AG04449 (cell line): ENCODE measurements at regions of chr14 and their contacts with region 1.

Region 1: GRCh38 chr14:28751467-28752058 is 15.0 kb upstream of the FOXG1 start:
- DNase-seq: no peak
- H3K4me3 ChIP-seq: no peak overlapping the region
- CTCF ChIP-seq: peak; percentile 74

Region 2: DNA sequence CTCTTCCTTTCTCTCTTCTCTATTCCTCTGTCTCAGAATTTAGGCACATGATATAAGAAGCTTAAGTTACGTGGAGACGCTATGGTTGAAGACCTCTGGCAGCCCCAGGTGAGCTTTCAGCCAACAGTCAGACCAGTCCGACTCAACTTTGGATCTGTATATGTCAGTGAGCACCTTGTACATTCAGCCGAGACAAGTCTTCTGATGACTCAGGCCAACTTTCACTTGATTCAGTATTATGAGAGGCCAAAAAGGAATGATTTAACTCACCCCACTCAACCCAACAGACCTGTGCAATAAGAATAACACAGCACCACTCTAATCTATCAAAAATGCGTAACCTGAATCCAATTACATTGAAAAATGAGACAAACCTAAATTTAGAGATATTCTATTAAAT is 32.4 kb before region 1 on chr14:
- CTCF ChIA-PET with region 1: no interaction called
- POLR2A ChIA-PET with region 1: no interaction called
- DNase-seq: no peak
- H3K4me3 ChIP-seq: no peak overlapping the region
- CTCF ChIP-seq: no peak

Region 3: DNA sequence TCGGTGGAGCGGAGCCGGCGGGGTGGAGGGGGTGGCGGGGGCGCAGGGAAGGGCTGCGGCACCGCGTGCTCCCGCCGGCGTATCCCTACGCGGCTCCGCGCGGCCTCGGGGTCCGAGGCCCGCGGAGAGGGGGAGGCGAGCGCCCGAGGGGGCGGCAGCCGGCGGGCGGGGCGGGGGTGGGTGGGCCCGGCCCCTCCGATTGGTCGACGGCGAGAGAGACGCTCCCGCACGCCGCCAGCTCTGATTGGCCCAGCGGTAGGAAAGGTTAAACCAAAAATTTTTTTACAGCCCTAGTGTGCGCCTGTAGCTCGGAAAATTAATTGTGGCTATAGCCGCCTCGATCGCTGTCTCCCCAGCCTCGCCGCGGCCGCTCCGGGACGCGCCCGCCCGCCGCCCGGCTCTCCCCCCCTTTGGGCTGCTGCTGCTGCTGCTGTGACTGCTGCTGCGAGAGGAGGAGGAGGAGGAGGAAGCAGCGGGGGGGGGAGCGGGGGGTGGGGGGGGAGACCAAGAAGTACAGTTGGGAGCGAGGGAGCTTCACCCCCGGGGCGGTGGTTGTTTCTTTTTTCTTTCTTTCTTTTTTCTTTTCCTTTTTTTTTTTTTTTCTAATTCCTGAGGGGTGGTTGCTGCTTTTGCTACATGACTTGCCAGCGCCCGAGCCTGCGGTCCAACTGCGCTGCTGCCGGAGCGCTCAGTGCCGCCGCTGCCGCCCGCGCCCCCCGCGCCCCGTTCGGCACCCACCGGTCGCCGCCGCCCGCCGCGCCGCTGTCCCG is 15.1 kb after region 1 on chr14 and contains the start of gene FOXG1:
- CTCF ChIA-PET with region 1: interaction called, 11 read pairs
- POLR2A ChIA-PET with region 1: no interaction called
- DNase-seq: no peak
- H3K4me3 ChIP-seq: peak within 1 kb of the TSS; percentile 33
- CTCF ChIP-seq: no peak

Region 4: DNA sequence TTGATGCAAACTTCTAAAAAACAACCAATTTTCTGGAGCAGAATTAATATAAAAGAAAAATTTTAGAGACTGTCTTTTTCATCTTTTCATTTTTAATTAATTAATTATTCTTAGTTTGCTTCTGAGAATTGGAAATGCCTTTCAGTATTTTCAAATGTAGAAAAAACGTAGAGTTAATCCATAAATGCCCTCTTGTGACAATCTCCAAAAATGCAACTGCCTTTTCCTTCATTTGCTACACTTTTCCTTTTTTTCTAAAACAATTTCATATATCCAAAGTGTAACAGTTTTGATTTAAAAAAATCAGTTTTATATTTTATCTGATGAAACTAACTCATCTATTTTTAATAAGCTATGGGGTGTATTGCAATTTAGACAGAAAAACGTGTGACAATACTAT is 766.8 kb after region 1 on chr14:
- CTCF ChIA-PET with region 1: interaction called, 14 read pairs
- POLR2A ChIA-PET with region 1: no interaction called
- DNase-seq: no peak
- H3K4me3 ChIP-seq: no peak overlapping the region
- CTCF ChIP-seq: peak; percentile 3

Region 5: GRCh38 chr14:29536886-29537511 is 785.4 kb after region 1 on chr14:
- CTCF ChIA-PET with region 1: interaction called, 93 read pairs
- POLR2A ChIA-PET with region 1: no interaction called
- DNase-seq: no peak
- H3K4me3 ChIP-seq: no peak overlapping the region
- CTCF ChIP-seq: no peak

Region 6: GRCh38 chr14:30270200-30271161 is 1518.9 kb after region 1 on chr14:
- CTCF ChIA-PET with region 1: interaction called, 19 read pairs
- POLR2A ChIA-PET with region 1: no interaction called
- DNase-seq: no peak
- H3K4me3 ChIP-seq: peak overlapping the region; percentile 47
- CTCF ChIP-seq: peak; percentile 91